Thyroid gland (tissue), 4 donors: ENCODE measurements at regions of chr16 and their contacts with region 1.

Region 1: DNA sequence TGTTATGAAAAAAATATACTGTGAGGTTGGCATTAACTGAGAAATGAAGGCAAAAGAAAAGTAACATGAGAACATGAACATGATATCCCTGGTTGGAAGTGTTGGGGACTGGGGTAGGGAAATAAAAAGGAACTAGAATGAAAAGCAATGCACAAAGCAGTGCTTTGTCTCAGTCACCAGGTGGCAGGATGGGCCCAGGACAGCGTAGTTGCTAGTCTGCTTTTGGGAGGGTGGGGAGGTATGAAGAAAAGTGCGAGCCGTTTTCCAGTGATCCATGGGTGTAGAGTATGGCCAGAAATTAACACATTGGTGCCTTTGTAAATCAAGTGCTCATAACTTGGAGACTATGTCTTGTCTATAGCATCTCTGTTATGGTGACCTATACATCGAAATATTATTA is 662.5 kb upstream of the SALL1 start:
- DNase-seq: no peak
- H3K4me3 ChIP-seq: no peak overlapping the region
- H3K27ac ChIP-seq: no peak overlapping the region
- H3K4me1 ChIP-seq: peaks cover 0 to 6% of the 10 kb centered on the region in 2 donors
- H3K27me3 ChIP-seq: no peaks in the 10 kb centered on the region
- CTCF ChIP-seq: no peak
- POLR2A ChIP-seq: no peak

Region 2: GRCh38 chr16:51779240-51779639 is 34.4 kb before region 1 on chr16:
- intact Hi-C with region 1: loop called (anchors 2 kb)
- DNase-seq: no peak
- H3K4me3 ChIP-seq: no peak overlapping the region
- H3K27ac ChIP-seq: no peak overlapping the region
- H3K4me1 ChIP-seq: no peaks in the 10 kb centered on the region
- H3K27me3 ChIP-seq: no peaks in the 10 kb centered on the region
- CTCF ChIP-seq: no peak
- POLR2A ChIP-seq: no peak